ENCODE measurements at regions of chr6 and their contacts with region 1.

Region 1: DNA sequence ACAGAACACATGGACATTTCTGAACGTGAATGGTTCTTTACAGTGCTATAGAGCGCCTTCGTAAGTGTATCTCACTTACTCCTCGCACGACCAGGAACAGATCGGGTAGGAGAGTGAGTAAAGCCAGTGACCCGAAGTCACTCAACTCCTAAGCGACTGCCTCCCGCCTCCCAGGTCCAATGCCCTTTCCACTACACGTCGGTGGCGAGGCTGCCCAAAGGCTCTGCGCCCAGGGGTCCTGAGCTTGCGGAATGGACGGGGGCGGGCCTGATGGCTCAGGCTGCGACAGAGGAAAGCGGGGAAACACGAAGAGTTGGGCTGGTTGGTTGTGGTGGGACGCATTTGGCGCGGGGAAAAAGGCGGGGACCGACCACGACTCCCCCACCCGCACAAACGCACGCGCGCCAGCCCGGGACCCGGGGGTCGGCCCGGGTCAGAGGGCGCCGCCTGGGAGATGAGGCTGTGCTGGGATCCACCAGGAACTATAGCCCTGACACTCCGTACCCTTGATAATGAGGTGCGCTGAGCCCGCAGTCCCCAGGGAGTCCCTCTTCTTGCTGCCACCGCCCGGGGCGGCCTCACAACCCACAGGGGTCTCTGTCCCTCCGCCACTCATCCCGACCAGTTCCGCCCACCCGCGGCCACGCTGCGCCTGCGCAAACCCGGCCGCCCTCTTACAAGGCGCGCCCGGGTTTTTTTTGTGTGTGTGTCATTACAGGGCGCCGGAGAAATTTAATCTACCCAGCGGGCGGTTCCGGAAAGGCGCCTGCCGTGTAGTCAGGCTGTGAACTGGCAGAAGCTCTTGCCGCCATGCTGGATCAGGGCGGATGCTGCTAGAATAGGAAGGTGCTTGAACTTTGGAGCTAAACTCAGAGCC is at the start of gene BLOC1S5:
- DNase-seq: peak; percentile 98
- H3K4me3 ChIP-seq: peak within 1 kb of the TSS; percentile 59 to 88 (median 76)
- H3K27ac ChIP-seq: peak within 1 kb of the TSS; percentile 76
- H3K4me1 ChIP-seq: peaks cover 18% of the 10 kb centered on the region
- H3K27me3 ChIP-seq: no peaks in the 10 kb centered on the region
- CTCF ChIP-seq: peak in 1 of 2 donors; percentile 13
- POLR2A ChIP-seq: peak; percentile 87
- total RNA-seq, gene BLOC1S5: 16.3 and 19.1 TPM in 2 replicates

Region 2: GRCh38 chr6:7615611-7616383 is 448.2 kb before region 1 on chr6:
- CTCF ChIA-PET with region 1: interaction called, 11 read pairs
- POLR2A ChIA-PET with region 1: no interaction called
- dilution Hi-C with region 1: no loop called
- intact Hi-C with region 1: loop called (anchors 2 kb)
- DNase-seq: peak; percentile 64
- H3K4me3 ChIP-seq: no peak overlapping the region
- H3K27ac ChIP-seq: no peak overlapping the region
- H3K4me1 ChIP-seq: no peaks in the 10 kb centered on the region
- H3K27me3 ChIP-seq: no peaks in the 10 kb centered on the region
- CTCF ChIP-seq: peak; percentile 54 to 66
- POLR2A ChIP-seq: no peak

Region 3: GRCh38 chr6:7887278-7887991 is 176.6 kb before region 1 on chr6:
- CTCF ChIA-PET with region 1: interaction called, 10 read pairs
- POLR2A ChIA-PET with region 1: no interaction called
- dilution Hi-C with region 1: no loop called
- intact Hi-C with region 1: no loop called
- DNase-seq: peak; percentile 64
- H3K4me3 ChIP-seq: no peak overlapping the region
- H3K27ac ChIP-seq: peak overlapping the region; percentile 36
- H3K4me1 ChIP-seq: peaks cover 11% of the 10 kb centered on the region
- H3K27me3 ChIP-seq: no peaks in the 10 kb centered on the region
- CTCF ChIP-seq: no peak
- POLR2A ChIP-seq: peak; percentile 83

Region 4: GRCh38 chr6:7992002-7992815 is 71.8 kb before region 1 on chr6:
- CTCF ChIA-PET with region 1: interaction called, 18 read pairs
- POLR2A ChIA-PET with region 1: no interaction called
- dilution Hi-C with region 1: no loop called
- intact Hi-C with region 1: loop called (anchors 5 kb)
- DNase-seq: peak; percentile 96
- H3K4me3 ChIP-seq: peak overlapping the region in 1 of 3 experiments; percentile 31
- H3K27ac ChIP-seq: peak overlapping the region; percentile 99
- H3K4me1 ChIP-seq: peaks cover 49% of the 10 kb centered on the region
- H3K27me3 ChIP-seq: no peaks in the 10 kb centered on the region
- CTCF ChIP-seq: peak; percentile 41 to 45
- POLR2A ChIP-seq: peak; percentile 70

Region 5: DNA sequence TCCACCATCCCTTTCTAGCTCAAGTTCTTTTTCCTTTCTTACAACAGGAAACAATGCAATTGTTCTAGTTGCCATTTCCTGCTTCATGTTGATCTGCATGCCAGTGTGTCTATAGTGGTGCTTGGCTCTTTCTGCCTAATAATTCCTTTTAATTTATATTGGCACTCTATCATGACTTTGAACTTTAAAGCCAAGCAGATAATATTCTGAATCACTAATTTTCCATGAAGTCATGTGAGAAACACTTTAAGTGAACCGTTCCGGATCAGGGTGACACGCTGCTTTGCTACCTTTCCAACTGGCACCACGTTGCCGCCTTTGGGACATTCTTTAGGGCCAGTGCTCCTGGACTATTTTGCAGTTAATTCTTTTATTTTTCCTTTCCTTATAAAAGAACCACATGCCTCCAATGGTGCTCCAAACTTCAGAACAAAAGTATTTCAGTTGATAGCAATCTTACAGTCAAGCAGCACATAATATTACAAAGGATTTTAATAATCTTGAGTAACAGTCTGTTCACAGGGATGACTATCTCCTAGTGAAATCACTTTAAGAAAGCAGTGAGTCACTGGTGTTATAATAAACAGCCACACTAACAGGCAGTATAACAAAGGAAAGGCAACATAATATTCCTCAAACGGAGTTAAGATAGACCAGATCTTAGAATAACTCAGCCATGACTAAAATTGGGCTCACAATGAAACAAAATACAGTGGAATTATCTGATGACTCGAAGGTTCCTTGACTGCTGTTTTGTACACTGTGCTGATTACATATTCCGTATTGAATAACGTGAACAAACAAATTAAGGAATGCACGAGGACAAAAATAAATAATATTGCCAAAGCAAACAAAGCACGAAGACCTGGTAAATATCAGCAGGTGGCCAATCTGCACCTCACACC is 19.2 kb after region 1 on chr6:
- CTCF ChIA-PET with region 1: interaction called, 9 read pairs
- POLR2A ChIA-PET with region 1: interaction called, 4 read pairs
- dilution Hi-C with region 1: no loop called
- intact Hi-C with region 1: loop called (anchors 1 kb)
- DNase-seq: peak; percentile 95
- H3K4me3 ChIP-seq: peak overlapping the region in 1 of 3 experiments; percentile 16
- H3K27ac ChIP-seq: peak overlapping the region; percentile 93
- H3K4me1 ChIP-seq: peaks cover 64% of the 10 kb centered on the region
- H3K27me3 ChIP-seq: no peaks in the 10 kb centered on the region
- CTCF ChIP-seq: no peak
- POLR2A ChIP-seq: no peak

Region 6: DNA sequence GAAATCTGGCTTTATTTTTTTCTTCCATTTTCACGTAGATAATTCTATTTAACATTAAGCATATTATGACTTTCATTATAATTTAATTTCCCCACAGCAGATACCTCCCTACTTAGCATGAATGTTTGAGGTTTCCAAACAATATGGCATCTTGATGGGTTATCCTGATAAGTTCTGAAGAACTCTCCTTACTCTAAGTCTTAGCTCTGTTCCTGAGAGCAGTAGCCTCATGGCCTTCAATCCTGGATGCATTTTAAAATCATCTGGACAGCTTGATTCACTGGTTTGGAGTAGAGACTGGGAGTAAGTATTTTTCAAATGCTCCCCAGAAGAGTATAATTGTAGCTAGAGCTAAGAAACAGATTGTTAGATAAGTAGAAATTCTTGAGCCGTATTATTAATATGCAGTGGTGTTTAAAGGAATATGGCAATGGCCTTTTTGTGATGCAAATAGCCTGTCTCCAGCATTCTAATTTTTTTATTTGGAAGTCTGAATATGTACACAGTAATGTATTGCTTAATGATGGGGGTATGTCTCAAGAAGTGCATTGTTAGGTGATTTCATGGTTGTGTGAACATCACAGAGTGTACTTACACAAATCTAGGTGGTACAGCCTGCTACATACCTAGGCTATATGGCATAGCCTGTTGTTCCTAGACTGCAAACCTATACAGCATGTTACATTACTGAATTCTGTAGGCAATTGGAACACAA is 148.9 kb after region 1 on chr6:
- CTCF ChIA-PET with region 1: interaction called, 37 read pairs
- POLR2A ChIA-PET with region 1: no interaction called
- dilution Hi-C with region 1: no loop called
- intact Hi-C with region 1: loop called (anchors 1 kb)
- DNase-seq: no peak
- H3K4me3 ChIP-seq: no peak overlapping the region
- H3K27ac ChIP-seq: no peak overlapping the region
- H3K4me1 ChIP-seq: no peaks in the 10 kb centered on the region
- H3K27me3 ChIP-seq: peaks cover 0 to 8% of the 10 kb centered on the region in 2 experiments
- CTCF ChIP-seq: no peak
- POLR2A ChIP-seq: no peak